ENCODE measurements at regions of chr19 and their contacts with region 1.

Region 1: GRCh38 chr19:38929929-38930775 is at the start of gene SARS2:
- H3K4me3 ChIP-seq: peak within 1 kb of the TSS; percentile 70
- H3K27ac ChIP-seq: peak within 1 kb of the TSS; percentile 81
- H3K4me1 ChIP-seq: peaks cover 10% of the 10 kb centered on the region; the same call in 1 of the 2 replicates
- CTCF ChIP-seq: peak; percentile 100

Region 2: DNA sequence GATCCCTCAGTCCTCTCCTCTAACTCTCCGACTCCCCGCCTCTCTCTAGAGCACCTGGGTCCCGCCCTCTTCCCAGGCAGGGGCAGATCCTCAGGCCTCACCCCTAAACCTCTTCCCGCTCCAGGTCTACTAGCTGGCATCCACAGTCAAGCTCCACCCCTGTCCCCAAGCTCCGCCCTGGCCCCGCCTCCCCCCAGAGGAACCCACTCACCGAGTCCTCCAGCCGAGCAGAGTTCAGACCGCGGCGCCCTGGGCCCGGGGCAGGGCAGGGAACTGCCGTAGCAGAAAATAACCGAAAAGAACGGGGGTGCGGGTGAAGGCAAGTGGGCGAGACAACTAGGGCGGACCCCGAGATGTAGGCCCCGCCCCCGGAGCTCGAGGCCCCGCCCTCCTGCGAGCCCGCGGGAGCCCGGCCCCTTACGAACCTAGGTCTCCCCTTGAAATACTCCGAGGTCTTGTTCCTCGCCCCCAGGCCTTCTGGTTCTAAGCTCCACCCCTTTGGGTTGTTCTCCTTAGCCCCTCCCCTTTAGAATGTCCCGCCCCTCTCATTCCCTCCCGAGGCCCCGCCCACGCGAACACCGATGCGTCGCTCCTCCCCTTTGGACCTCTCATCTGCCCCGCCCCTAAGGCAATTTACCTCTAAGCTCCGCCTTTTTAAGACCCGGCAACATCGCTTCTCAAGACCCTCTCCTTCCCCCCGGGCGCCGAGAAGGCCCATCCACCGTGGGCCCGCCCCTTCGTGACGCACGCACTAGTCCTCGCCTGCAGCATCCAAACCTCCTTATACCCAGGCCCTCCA is 542.4 kb before region 1 on chr19 and contains the start of gene GGN:
- CTCF ChIA-PET with region 1: interaction called, 9 read pairs
- POLR2A ChIA-PET with region 1: interaction called, 11 read pairs
- H3K4me3 ChIP-seq: peak within 1 kb of the TSS; percentile 56
- H3K27ac ChIP-seq: peak within 1 kb of the TSS; percentile 63
- H3K4me1 ChIP-seq: peaks cover 19% of the 10 kb centered on the region
- CTCF ChIP-seq: no peak

Region 3: DNA sequence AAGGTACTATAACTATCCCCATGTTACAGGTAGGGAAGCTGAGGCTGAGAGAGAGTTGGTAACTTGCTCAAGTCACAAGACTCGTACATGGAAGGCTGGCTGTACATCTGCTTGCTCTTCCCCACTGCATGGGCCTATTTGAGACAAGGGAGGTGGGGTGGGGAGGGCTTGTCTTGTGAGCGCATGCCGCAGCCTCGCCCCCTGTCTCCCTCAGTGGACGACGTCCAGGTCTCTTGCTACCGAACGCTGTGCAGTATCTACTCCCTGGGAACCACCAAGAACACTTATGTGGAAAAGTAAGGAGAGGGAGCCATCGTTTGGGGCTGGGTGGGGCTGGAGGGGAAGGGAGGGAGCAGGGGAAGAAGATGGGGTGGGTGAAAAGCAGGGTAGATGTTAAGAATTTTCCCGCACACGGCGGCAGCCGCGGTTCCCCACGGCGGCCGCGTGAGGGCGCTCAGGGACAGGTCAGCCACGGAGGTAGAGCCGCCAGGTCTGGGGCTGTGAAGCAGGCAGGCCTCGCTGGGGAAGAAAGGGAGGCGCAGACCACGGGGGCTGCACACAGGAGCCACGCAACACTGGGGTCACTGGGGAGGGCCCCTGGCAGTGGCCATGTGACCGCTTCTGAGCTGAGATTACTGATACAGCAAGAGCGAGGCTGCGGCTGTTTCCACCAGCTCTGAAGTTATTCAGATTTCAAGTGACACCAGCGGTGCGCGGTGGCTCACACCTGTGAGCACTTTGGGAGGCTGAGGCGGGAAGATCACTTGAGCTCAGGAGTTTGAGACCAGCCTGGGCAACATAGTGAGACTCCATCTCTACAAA is 415.1 kb before region 1 on chr19:
- CTCF ChIA-PET with region 1: interaction called, 22 read pairs
- POLR2A ChIA-PET with region 1: no interaction called
- H3K4me3 ChIP-seq: no peak overlapping the region
- H3K27ac ChIP-seq: no peak overlapping the region
- H3K4me1 ChIP-seq: no peaks in the 10 kb centered on the region
- CTCF ChIP-seq: peak; percentile 97

Region 4: GRCh38 chr19:38734426-38735256 is 195.5 kb before region 1 on chr19:
- CTCF ChIA-PET with region 1: interaction called, 13 read pairs
- POLR2A ChIA-PET with region 1: interaction called, 4 read pairs
- H3K4me3 ChIP-seq: no peak overlapping the region
- H3K27ac ChIP-seq: peak overlapping the region; percentile 55; the same call in 1 of the 2 replicates
- H3K4me1 ChIP-seq: peaks cover 5% of the 10 kb centered on the region
- CTCF ChIP-seq: no peak

Region 5: DNA sequence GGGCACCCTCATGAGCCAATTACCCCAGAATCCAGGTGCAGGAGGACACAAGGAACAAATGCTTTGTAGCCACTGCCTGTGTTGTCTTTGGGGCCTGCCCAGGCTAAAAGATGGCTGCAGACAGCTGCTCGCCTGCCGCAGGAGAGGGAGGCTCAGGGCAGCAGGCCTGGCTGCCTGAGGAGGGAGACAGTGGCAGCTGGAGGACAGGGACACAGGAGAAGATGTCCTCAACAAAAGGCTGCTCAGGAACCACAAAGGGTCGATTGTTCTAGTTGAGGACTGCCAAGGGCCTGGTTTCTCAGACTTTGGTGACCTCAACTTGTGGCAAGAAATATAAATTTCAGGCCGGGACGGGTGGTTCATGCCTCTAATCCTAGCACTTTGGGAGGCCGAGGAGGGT is 38.4 kb before region 1 on chr19:
- CTCF ChIA-PET with region 1: interaction called, 28 read pairs
- POLR2A ChIA-PET with region 1: interaction called, 4 read pairs
- H3K4me3 ChIP-seq: no peak overlapping the region
- H3K27ac ChIP-seq: no peak overlapping the region
- H3K4me1 ChIP-seq: peaks cover 3% of the 10 kb centered on the region; the same call in 1 of the 2 replicates
- CTCF ChIP-seq: no peak

Region 6: DNA sequence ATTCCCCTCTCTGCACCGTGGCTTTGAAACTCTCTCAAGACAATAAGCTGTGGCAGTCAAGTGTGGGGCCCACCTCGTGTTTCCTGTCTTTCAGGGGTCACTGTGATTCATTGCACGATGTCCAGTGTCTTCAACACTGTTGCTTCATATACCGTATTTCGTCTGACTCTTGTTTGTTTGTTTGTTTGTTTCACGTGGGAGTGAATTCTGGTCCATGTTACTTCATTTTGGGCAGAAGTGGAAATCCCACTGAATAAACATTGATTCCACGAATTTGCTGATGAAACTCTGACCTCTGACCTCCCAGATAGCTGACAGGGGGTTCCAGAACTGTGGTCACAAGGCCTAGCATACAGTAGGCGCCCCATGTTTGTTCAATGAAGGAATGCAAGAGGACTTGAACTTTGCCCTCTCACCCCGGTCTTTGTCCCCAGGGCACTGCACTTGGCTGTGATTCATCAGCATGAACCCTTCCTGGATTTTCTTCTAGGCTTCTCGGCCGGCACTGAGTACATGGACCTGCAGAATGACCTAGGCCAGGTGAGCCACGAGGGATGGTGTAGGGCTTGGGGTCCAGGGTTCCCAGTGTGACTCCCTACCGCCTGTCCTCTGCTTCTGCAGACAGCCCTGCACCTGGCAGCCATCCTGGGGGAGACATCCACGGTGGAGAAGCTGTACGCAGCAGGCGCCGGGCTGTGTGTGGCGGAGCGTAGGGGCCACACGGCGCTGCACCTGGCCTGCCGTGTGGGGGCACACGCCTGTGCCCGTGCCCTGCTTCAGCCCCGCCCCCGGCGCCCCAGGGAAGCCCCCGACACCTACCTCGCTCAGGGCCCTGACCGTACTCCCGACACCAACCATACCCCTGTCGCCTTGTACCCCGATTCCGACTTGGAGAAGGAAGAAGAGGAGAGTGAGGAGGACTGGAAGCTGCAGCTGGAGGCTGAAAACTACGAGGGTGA is 25.3 kb before region 1 on chr19:
- CTCF ChIA-PET with region 1: interaction called, 63 read pairs
- POLR2A ChIA-PET with region 1: interaction called, 29 read pairs
- H3K4me3 ChIP-seq: no peak overlapping the region
- H3K27ac ChIP-seq: peak overlapping the region; percentile 44
- H3K4me1 ChIP-seq: peaks cover 11% of the 10 kb centered on the region
- CTCF ChIP-seq: no peak

Region 7: GRCh38 chr19:38944981-38945506 is 14.9 kb after region 1 on chr19:
- CTCF ChIA-PET with region 1: interaction called, 60 read pairs
- POLR2A ChIA-PET with region 1: interaction called, 10 read pairs
- H3K4me3 ChIP-seq: no peak overlapping the region
- H3K27ac ChIP-seq: no peak overlapping the region
- H3K4me1 ChIP-seq: no peaks in the 10 kb centered on the region
- CTCF ChIP-seq: no peak

Region 8: DNA sequence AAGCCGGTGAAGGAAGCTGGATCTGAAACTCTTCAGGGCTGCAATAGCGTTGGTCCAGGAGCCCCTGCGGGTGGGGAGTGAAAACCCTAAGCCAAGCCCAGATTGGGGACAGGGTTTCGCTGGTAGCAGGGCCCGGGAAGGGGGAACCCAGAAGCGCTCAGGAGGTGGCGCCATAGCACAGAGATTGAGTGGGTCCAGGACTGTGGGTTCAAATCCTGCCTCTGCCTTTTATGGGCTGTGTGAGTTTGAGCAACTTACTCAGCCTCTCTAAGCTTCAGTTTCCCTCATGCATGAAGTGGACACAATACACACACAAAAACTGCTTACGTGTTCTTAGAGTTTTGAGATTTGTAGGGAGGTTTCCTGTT is 282.2 kb after region 1 on chr19:
- CTCF ChIA-PET with region 1: no interaction called
- POLR2A ChIA-PET with region 1: no interaction called
- H3K4me3 ChIP-seq: no peak overlapping the region
- H3K27ac ChIP-seq: no peak overlapping the region
- H3K4me1 ChIP-seq: no peaks in the 10 kb centered on the region
- CTCF ChIP-seq: peak; percentile 76

Measured in HEK293 (cell line).